Calu3 (cell line): ENCODE measurements at regions of chr10 and their contacts with region 1.

Region 1: GRCh38 chr10:111762114-111762513 is 421.5 kb downstream of the GPAM start:
- DNase-seq: no peak
- H3K4me3 Mint-ChIP-seq: no peak overlapping the region
- H3K27ac Mint-ChIP-seq: no peak overlapping the region
- H3K4me1 Mint-ChIP-seq: no peaks in the 10 kb centered on the region
- H3K27me3 Mint-ChIP-seq: peaks cover 25% of the 10 kb centered on the region
- CTCF ChIP-seq: no peak

Region 2: DNA sequence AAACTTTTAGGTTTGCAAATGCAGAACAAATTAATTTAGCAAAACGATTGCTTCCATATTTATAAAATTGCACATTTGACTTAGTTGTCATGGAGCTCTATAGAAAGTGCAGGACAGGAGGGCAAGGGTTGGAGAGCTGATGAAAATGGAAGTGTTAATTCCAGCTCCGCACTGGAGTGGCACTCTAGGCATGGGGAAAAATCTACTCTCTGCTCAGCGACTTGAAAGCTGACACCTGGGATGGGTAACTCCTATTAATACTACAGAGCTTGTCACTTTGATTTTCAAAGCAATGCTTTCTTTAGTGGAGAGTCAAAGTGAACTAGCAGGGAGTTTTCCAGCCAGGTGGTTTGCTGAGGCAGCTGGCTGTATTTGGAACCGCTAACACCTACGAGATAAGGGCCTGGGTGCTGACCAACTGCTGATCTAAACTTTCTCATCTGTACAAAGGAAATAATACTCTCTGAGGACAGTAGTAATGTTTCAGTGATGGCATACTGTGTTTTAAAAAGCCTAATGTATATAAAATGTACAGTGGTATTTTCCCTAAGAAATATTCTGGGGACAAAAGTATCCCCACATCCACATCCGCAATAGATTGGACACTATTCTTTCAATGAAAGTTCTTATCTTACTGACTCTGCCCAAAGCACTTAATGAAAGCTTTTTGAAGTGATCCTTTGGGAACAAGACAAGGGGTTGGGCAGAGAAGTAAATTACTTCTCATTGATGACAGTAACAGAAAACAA is 22.8 kb before region 1 on chr10:
- CTCF ChIA-PET with region 1: no interaction called
- intact Hi-C with region 1: no loop called
- DNase-seq: no peak
- H3K4me3 Mint-ChIP-seq: no peak overlapping the region
- H3K27ac Mint-ChIP-seq: no peak overlapping the region
- H3K4me1 Mint-ChIP-seq: no peaks in the 10 kb centered on the region
- H3K27me3 Mint-ChIP-seq: no peaks in the 10 kb centered on the region
- CTCF ChIP-seq: no peak

Region 3: GRCh38 chr10:111990734-111991133 is 228.6 kb after region 1 on chr10:
- CTCF ChIA-PET with region 1: no interaction called
- intact Hi-C with region 1: loop called (anchors 5 kb)
- DNase-seq: no peak
- H3K4me3 Mint-ChIP-seq: no peak overlapping the region
- H3K27ac Mint-ChIP-seq: no peak overlapping the region
- H3K4me1 Mint-ChIP-seq: no peaks in the 10 kb centered on the region
- H3K27me3 Mint-ChIP-seq: peaks cover 85% of the 10 kb centered on the region
- CTCF ChIP-seq: no peak

Region 4: DNA sequence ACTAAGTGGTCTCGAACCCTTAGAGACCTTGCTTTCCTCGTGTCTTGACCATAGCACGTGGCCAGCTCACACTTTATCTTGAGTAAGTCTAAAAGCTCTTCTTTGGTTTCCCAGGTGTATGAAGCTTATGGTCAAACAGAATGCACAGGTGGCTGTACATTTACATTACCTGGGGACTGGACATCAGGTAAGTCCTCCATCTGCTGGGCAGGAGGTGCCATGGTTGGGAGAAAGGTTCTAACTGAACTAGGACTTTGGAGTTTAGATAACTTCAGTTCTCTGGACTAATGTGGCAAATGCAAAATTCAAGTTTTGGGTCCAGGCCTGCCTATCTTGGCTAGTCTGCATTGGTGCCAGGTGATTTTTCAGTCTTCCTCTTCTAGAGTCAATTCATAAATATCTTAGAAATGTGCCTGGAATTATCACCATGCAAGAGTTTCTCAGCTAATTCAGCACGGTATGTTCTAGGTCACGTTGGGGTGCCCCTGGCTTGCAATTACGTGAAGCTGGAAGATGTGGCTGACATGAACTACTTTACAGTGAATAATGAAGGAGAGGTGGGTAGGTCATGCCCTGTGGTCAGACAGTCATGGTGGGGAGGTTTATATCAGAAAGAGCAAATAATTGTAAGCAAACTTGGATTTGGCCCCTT is 659.5 kb after region 1 on chr10:
- CTCF ChIA-PET with region 1: no interaction called
- intact Hi-C with region 1: no loop called
- DNase-seq: no peak
- H3K4me3 Mint-ChIP-seq: no peak overlapping the region
- H3K27ac Mint-ChIP-seq: no peak overlapping the region
- H3K4me1 Mint-ChIP-seq: no peaks in the 10 kb centered on the region
- H3K27me3 Mint-ChIP-seq: no peaks in the 10 kb centered on the region
- CTCF ChIP-seq: no peak